SK-N-SH (cell line): ENCODE measurements at regions of chr22 and their contacts with region 1.

Region 1: GRCh38 chr22:25048659-25049647 is 96.4 kb downstream of the KIAA1671 start:
- DNase-seq: peak; percentile 84
- H3K4me3 ChIP-seq: no peak overlapping the region; a peak in 1 of 4 replicates
- H3K27ac ChIP-seq: peak overlapping the region in 1 of 2 experiments; percentile 17; a peak in 1 of 4 replicates
- H3K4me1 ChIP-seq: peaks cover 0 to 23% of the 10 kb centered on the region in 2 experiments; a peak in 1 of 4 replicates
- H3K27me3 ChIP-seq: no peaks in the 10 kb centered on the region
- CTCF ChIP-seq: peak; percentile 90
- EP300 ChIP-seq: no peak
- RAD21 ChIP-seq: peak; percentile 92

Region 2: DNA sequence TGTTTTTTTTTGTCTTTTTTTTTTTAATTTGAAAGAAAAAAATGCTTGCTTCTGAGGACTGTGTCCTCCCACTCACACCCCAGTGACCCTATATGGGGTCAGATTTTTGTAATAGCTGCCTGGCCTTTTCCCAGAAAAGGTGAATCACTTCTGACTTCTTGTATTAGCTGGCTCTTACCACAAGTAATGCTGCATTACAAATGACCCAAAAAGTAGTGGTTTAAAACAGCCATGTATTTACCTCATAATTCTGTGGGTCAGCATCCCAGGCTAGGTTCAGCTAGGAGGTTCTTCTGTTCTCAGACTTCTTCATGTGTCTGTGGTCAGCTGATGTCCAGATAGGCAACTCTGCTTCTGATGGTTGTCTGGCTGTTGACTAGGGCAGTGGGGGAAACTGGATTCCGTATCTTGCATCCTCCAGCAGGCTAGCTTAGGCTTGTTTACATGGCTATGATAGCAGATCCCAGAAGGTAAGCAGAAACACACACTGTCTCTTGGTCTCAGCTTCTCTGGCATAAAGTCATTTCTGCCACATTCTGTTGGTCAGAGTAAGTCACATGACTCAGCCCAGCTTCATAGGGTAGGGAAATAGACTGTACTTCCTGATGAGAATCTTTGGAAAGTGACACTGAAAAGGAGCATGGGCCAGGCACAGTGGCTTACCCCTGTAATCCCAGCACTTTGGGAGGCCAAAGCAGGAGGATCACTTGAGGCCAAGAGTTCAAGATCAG is 121.9 kb before region 1 on chr22:
- CTCF ChIA-PET with region 1: interaction called, 11 read pairs
- POLR2A ChIA-PET with region 1: no interaction called
- DNase-seq: no peak
- H3K4me3 ChIP-seq: no peak overlapping the region
- H3K27ac ChIP-seq: no peak overlapping the region
- H3K4me1 ChIP-seq: no peaks in the 10 kb centered on the region
- H3K27me3 ChIP-seq: no peaks in the 10 kb centered on the region
- CTCF ChIP-seq: no peak
- EP300 ChIP-seq: no peak
- RAD21 ChIP-seq: no peak

Region 3: DNA sequence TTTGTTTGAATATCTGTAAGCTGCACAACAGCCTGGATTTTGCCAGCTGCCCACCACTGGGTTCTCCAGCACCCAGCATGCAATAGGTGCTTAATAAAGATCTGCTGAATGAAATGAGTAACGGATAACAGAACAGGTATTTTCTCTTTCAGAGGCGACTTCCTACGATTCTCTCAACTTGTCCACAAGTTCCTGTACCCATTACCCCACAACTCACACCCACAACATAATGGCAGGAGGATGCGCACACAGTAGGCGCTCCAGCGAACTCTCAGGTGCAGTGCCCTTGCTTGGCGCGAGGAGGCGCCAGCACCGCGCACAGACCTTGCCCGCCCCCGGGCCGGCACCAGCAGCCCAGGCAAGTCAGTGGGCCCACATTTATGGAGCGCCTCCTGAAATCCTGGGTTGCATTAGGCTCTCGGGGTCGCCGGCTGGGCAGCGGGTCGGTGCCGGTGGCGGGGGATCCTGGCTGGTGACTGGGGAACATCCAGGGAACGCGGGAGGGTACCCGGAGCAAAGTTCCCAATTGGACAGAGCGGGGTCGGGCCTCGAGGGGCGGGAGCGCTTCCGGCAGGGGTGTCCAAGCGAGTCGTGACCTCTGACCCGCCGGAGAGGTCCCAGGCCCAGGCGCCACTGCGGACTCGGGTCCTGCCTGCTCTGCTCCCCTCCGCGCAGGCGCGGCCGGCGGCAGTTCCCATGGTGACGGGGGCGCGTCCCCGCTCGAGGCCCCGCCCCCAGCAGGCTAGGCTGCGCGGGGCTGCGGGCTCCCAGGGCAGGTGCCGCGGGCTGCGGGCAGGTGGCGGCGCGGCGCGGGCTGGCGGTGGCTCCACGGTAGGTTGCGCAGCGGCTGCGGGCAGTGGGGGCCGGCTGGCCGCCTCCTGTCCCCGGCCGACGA is 96.8 kb before region 1 on chr22 and contains the start of gene KIAA1671:
- CTCF ChIA-PET with region 1: interaction called, 513 read pairs
- POLR2A ChIA-PET with region 1: no interaction called
- DNase-seq: peak; percentile 99
- H3K4me3 ChIP-seq: peak within 1 kb of the TSS; percentile 73 to 93
- H3K27ac ChIP-seq: peak within 1 kb of the TSS; percentile 82 to 87
- H3K4me1 ChIP-seq: peaks cover 14 to 15% of the 10 kb centered on the region in 2 experiments; a peak in 3 of 4 replicates
- H3K27me3 ChIP-seq: no peaks in the 10 kb centered on the region
- CTCF ChIP-seq: peak; percentile 97
- EP300 ChIP-seq: no peak
- RAD21 ChIP-seq: peak; percentile 91
- polyA plus RNA-seq, gene KIAA1671: 7.0 and 7.4 TPM in 2 replicates

Region 4: GRCh38 chr22:24961217-24961844 is 87.6 kb before region 1 on chr22:
- CTCF ChIA-PET with region 1: interaction called, 22 read pairs
- POLR2A ChIA-PET with region 1: interaction called, 3 read pairs
- DNase-seq: no peak
- H3K4me3 ChIP-seq: no peak overlapping the region
- H3K27ac ChIP-seq: no peak overlapping the region
- H3K4me1 ChIP-seq: peaks cover 0 to 4% of the 10 kb centered on the region in 2 experiments; a peak in 1 of 4 replicates
- H3K27me3 ChIP-seq: no peaks in the 10 kb centered on the region
- CTCF ChIP-seq: no peak
- EP300 ChIP-seq: no peak
- RAD21 ChIP-seq: no peak

Region 5: DNA sequence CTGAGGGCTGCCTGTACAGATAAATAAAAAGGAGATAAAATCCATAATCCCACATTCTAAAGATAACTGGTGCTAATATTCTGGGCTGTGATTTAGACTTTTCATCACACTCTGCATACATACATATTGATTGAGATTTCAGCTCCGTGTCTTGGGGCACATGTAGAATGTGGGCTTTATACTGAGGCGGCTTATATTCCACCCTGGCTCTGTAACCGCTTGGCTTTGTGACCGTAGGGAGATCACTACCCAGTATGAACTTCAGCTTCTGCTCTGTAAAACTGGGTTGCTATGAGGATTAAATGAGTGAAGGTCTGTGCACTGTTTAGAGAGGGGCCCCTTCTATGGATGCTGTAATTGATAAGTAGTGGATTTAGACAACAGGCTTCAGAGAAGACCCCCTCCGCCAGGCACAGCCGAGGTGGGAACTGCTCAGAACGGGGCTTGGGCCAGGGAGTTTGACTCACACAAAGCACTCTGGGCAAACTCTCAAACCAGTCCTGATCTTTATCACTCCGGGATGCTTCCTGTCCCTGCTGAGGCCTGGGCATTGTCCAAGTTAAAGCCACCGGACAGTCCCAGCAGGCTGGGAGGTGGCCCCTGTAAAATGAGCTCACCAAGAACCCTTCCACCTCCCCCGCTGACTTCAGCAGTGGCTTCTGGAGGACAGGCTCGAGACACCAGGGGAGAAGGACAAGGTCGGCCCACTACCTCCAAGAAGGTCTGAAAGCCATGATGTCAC is 79.2 kb before region 1 on chr22:
- CTCF ChIA-PET with region 1: interaction called, 14 read pairs
- POLR2A ChIA-PET with region 1: no interaction called
- DNase-seq: peak; percentile 85
- H3K4me3 ChIP-seq: no peak overlapping the region; a peak in 1 of 4 replicates
- H3K27ac ChIP-seq: peak overlapping the region; percentile 96
- H3K4me1 ChIP-seq: peaks cover 27 to 30% of the 10 kb centered on the region in 2 experiments
- H3K27me3 ChIP-seq: no peaks in the 10 kb centered on the region
- CTCF ChIP-seq: no peak
- EP300 ChIP-seq: peak; percentile 89 to 94
- RAD21 ChIP-seq: no peak

Region 6: DNA sequence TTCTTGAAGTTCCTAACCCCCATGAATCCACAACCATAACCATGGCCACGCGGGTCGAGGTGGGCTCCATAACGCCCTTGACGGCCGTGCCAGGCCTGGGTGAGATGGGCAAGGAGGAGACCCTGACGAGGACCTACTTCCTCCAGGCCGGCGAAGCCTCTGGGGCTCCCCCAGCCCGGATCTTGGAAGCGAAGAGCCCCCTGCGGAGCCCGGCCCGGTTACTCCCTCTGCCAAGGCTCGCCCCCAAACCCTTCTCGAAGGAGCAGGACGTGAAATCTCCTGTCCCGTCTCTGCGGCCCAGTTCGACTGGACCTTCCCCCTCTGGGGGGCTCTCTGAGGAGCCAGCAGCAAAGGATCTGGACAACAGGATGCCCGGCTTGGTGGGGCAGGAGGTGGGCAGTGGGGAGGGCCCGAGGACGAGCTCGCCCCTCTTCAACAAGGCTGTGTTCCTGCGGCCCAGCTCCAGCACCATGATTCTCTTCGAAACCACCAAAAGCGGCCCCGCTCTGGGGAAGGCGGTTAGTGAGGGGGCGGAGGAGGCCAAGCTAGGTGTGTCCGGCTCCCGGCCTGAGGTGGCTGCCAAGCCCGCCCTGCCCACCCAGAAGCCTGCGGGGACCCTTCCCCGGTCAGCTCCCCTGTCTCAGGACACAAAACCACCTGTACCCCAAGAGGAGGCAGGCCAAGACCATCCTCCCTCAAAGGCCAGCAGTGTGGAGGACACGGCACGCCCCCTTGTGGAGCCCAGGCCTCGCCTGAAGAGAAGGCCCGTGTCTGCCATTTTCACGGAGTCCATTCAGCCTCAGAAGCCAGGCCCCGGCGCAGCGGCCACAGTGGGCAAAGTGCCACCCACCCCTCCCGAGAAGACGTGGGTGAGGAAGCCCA is 20.8 kb before region 1 on chr22:
- CTCF ChIA-PET with region 1: interaction called, 57 read pairs
- POLR2A ChIA-PET with region 1: no interaction called
- DNase-seq: peak; percentile 66
- H3K4me3 ChIP-seq: no peak overlapping the region
- H3K27ac ChIP-seq: no peak overlapping the region
- H3K4me1 ChIP-seq: peaks cover 13% of the 10 kb centered on the region in 2 experiments; a peak in 1 of 4 replicates
- H3K27me3 ChIP-seq: no peaks in the 10 kb centered on the region
- CTCF ChIP-seq: peak; percentile 56
- EP300 ChIP-seq: no peak
- RAD21 ChIP-seq: peak; percentile 69